Activated CD8-positive, alpha-beta T cell treated with anti-CD3 and anti-CD28 coated beads for 36 hours (primary cell): ENCODE measurements at regions of chr2 and their contacts with region 1.

Region 1: GRCh38 chr2:151999053-151999452 is 99.8 kb downstream of the CACNB4 start:
- DNase-seq: peak; percentile 59
- ATAC-seq: peak; percentile 87
- H3K4me3 Mint-ChIP-seq: no peak overlapping the region
- H3K27ac Mint-ChIP-seq: no peak overlapping the region
- H3K4me1 Mint-ChIP-seq: no peaks in the 10 kb centered on the region
- H3K27me3 Mint-ChIP-seq: no peaks in the 10 kb centered on the region
- CTCF ChIP-seq: peak; percentile 88

Region 2: DNA sequence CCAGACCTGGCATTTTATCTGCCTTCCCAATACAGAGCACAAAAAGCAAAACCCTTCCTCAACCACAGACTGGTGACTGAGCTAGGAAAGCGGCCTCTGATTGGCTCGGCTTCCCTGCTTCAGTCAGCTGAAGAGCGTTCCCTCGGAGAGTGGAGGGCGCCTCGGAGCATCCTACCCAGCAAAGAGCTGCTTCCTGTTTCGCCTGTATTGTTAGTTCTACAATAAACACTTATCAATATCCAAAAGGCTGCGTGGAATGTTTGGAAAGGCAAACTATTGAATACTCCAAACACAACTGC is 25.2 kb before region 1 on chr2:
- CTCF ChIA-PET with region 1: interaction called, 14 read pairs
- POLR2A ChIA-PET with region 1: no interaction called
- intact Hi-C with region 1: no loop called
- DNase-seq: no peak
- ATAC-seq: no peak
- H3K4me3 Mint-ChIP-seq: no peak overlapping the region
- H3K27ac Mint-ChIP-seq: no peak overlapping the region
- H3K4me1 Mint-ChIP-seq: peaks cover 10% of the 10 kb centered on the region
- H3K27me3 Mint-ChIP-seq: peaks cover 2% of the 10 kb centered on the region
- CTCF ChIP-seq: no peak

Region 3: DNA sequence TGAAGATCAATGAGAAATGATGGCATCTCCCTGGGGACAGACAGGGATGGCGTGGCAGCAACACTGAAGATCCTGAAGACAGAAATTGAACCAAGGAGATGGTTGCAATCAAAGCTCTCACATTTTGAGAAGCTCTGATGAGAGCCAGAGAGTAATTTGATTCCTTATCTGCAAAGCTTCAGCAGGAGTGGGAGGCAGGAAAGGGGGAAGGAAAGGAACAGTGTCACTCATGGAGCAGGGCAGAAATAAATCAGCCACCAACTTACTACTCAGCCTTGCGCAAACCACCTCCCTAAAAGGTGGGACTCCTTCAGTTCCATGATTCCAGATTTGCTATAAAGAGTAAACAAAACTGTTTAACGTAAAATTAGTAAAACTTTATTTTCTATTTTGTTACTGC is 19.4 kb before region 1 on chr2:
- CTCF ChIA-PET with region 1: interaction called, 14 read pairs
- POLR2A ChIA-PET with region 1: no interaction called
- intact Hi-C with region 1: no loop called
- DNase-seq: no peak
- ATAC-seq: no peak
- H3K4me3 Mint-ChIP-seq: no peak overlapping the region
- H3K27ac Mint-ChIP-seq: no peak overlapping the region
- H3K4me1 Mint-ChIP-seq: peaks cover 10% of the 10 kb centered on the region
- H3K27me3 Mint-ChIP-seq: peaks cover 10% of the 10 kb centered on the region
- CTCF ChIP-seq: no peak

Region 4: DNA sequence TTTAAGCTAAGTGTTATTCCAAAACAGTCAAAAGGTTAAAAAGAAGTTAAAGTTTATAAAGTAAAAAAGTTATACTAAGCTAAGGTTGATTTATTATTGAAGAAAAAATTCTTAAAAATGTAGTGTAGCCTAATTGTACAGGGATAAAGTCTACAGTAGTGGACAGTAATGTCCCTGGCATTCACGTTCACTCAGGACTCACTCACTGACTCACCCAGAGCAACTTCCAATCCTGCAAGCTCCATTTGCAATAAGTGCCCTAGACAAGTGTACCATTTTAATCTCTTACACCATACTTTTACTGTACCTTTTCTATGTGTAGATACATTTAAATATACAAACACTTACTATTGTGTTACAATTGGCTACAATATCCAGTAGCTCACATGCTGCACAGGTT is 13.6 kb after region 1 on chr2:
- CTCF ChIA-PET with region 1: interaction called, 15 read pairs
- POLR2A ChIA-PET with region 1: no interaction called
- intact Hi-C with region 1: no loop called
- DNase-seq: no peak
- ATAC-seq: no peak
- H3K4me3 Mint-ChIP-seq: no peak overlapping the region
- H3K27ac Mint-ChIP-seq: no peak overlapping the region
- H3K4me1 Mint-ChIP-seq: no peaks in the 10 kb centered on the region
- H3K27me3 Mint-ChIP-seq: no peaks in the 10 kb centered on the region
- CTCF ChIP-seq: no peak

Region 5: DNA sequence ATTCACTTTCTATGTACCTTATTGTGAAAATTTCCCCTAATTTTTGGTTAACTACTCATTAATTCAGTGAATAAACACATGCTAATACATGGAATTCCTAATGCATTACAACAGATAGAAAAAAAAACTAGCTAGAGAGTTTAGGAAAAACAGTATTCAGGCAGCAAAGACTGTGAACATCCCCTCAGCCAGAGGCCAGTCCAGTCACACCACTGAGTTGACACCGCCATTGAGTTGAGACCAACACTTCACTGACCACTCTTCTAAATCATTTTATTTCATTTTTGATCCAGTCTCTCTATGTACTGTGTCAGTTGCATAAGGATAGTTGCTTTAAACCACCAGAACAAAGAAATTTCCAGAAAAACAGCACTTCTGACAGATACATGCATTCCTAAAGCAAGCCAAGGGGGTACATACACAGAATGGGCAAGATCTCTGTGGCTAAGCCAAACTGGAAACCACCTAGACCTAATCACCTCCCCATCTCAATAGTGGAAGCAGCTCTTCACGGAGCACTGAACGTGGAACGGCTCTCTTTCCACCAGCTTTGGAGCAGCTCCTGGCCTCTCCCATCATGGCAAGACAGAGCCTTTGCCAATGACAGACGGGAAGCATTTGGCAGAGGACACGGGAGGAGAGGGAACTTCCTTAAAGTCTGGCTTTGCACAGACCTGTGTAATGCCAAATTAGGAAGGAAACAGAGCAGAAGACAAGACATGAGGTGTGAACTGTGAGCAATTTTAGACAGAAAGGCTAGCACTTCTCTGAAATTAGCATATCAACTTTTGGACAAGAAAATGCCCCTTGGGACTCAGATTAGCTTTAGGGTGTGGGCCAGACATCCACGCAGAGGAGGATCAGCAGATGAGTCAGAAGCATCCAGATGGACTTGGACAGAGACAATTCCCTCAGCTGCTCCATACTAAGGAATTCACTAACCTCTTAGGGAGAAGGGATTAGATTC is 63.4 kb after region 1 on chr2:
- CTCF ChIA-PET with region 1: no interaction called
- POLR2A ChIA-PET with region 1: no interaction called
- intact Hi-C with region 1: no loop called
- DNase-seq: no peak
- ATAC-seq: no peak
- H3K4me3 Mint-ChIP-seq: no peak overlapping the region
- H3K27ac Mint-ChIP-seq: no peak overlapping the region
- H3K4me1 Mint-ChIP-seq: no peaks in the 10 kb centered on the region
- H3K27me3 Mint-ChIP-seq: peaks cover 4% of the 10 kb centered on the region
- CTCF ChIP-seq: no peak